ENCODE measurements at regions of chr11 and their contacts with region 1.

Region 1: DNA sequence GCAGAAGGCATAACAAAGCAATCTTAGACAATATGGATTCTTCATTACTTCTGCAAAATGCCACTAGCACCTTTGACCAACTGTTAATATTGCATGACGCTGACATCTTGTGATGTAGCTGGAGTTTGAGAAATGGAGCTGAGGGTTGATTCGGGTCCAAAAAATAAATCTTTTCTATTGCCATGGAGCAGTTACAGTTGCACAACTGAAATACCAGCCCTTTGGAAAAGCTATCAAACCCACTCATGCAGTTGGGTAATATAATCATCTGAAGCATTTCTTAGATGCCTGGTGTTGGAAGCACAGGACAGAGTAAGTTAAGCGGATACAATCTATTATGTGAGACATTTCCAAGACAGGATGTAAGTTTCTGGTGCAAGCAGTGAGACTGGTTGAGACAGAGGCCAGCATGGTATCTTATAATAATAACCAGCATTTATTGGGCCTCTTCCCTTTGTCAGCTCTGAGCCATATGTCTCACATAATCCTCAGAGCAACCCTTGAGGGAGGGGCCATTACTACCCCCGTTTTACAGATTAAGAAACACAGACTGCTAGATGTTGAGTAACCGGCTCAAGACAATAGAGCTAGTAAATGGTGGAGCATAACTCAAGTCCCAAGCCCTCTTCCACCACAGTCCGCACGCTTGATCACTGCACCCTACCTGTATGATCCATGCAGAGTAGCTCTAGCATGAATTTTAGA is 74.9 kb upstream of the CAPRIN1 start:
- DNase-seq: no peak
- ATAC-seq: no peak
- H3K4me3 Mint-ChIP-seq: no peak overlapping the region
- H3K27ac Mint-ChIP-seq: no peak overlapping the region
- H3K4me1 Mint-ChIP-seq: no peaks in the 10 kb centered on the region
- H3K27me3 Mint-ChIP-seq: peaks cover 23% of the 10 kb centered on the region

Region 2: DNA sequence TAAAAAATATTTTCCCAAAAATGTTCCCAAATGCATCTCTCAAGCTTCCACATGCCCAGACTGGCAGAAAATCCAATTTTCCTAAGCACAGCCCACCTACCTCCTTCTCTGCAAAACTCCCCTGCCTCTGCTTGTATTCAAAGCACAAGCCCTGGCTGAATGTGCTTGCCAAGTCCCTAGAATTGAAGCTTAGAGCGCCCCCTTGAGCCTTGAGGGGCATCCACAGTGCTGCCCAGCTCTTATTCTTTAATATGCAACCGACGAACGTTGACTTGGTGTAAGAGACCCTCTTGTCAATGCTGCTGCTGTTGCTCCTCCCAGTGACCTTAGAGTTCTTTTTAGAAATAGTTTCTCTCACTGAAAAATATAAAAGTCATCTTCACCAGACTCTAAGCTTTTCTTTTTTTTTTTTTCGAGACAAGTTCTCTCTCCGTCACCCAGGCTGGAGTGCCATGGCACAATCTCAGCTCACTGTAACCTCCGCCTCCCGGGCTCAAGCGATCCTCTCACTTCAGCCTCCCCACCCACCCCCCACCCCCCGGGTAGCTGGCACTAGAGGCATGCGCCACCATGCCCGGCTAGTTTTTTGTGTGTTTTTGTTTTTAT is 11.4 kb after region 1 on chr11:
- CTCF ChIA-PET with region 1: interaction called, 37 read pairs
- POLR2A ChIA-PET with region 1: no interaction called
- DNase-seq: peak; percentile 87
- ATAC-seq: peak; percentile 90
- H3K4me3 Mint-ChIP-seq: no peak overlapping the region
- H3K27ac Mint-ChIP-seq: no peak overlapping the region
- H3K4me1 Mint-ChIP-seq: peaks cover 13% of the 10 kb centered on the region
- H3K27me3 Mint-ChIP-seq: peaks cover 3% of the 10 kb centered on the region